Activated CD4-positive, alpha-beta T cell treated with anti-CD3 and anti-CD28 coated beads, Interleukin-2, amount 10 ng/mL, durations not matched to agents 7 days and 5 days (primary cell): ENCODE measurements at regions of chr10 and their contacts with region 1.

Region 1: GRCh38 chr10:17228091-17228940 is at the start of gene VIM:
- DNase-seq: peak; percentile 88
- H3K4me3 Mint-ChIP-seq: peak within 1 kb of the TSS; percentile 99
- H3K27ac Mint-ChIP-seq: peak within 1 kb of the TSS; percentile 100
- H3K4me1 Mint-ChIP-seq: peaks cover 50% of the 10 kb centered on the region
- H3K27me3 Mint-ChIP-seq: peaks cover 2% of the 10 kb centered on the region
- total RNA-seq, gene VIM: 2,713 to 2,904 TPM

Region 2: GRCh38 chr10:17151716-17152115 is 76.6 kb before region 1 on chr10:
- CTCF ChIA-PET with region 1: no interaction called
- POLR2A ChIA-PET with region 1: no interaction called
- DNase-seq: no peak
- H3K4me3 Mint-ChIP-seq: no peak overlapping the region
- H3K27ac Mint-ChIP-seq: no peak overlapping the region
- H3K4me1 Mint-ChIP-seq: no peaks in the 10 kb centered on the region
- H3K27me3 Mint-ChIP-seq: no peaks in the 10 kb centered on the region

Region 3: DNA sequence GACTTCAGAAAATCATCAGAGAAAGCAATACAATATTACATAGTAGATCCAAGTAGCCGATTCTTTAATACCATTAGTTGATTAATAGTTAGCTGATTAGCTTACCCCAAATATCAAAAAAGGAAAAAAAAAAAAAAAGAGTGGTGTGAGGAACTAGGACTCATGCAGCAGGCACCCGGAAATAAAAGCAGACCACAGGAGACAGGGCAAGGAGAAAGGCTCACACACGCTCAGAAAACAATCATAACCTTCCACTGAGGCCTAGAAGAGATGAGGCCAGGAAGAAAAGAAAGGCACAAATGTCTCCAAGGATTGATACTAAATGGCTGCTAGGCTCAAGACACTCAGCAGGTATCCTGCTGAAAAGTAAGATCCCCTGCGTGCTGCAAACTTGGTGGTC is 52.8 kb before region 1 on chr10:
- CTCF ChIA-PET with region 1: no interaction called
- POLR2A ChIA-PET with region 1: interaction called, 11 read pairs
- DNase-seq: no peak
- H3K4me3 Mint-ChIP-seq: peak overlapping the region; percentile 57
- H3K27ac Mint-ChIP-seq: peak overlapping the region; percentile 83
- H3K4me1 Mint-ChIP-seq: peaks cover 21% of the 10 kb centered on the region
- H3K27me3 Mint-ChIP-seq: no peaks in the 10 kb centered on the region

Region 4: DNA sequence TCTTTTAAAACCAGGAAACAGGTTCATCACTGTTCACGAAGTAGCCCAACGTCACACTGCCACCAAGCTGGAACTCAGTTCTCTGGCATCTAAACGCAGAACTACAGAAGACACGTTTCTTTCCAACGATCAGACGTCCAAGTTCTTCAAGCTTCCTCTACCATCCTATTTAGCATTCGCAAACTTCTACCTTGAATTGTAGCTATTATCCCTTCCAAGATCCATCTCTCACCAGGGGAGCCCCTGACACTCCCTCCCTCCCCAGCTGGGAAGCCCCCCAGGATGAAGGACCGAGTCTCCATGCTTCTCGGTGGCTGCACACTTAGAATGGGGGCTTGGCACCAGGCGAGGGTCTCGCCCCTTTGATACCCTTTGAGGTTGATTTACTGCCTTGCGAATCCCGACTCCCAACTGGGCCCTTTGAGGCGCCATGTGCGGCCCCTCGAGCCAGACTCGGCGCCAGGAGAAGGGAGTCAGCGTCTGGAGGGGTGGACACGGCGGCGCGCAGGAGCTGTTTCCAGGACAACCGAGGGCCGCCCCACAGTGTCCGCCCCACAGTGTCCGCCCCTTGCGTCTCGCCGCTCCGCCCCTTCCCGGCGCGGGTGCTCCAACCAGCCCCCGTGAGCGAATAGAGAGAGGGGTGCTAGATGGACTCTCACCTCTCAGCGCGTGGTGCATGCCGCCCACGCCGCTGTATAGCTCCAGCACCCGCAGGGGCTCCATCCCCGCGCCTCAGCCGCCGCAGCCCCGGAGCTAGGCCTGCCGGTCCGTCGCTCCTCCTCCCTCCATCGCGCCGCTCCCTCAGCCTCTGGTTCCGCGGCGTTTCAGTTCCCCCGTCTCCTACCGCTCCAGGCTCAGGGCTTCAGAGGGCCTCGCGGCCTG is 27.2 kb before region 1 on chr10 and contains the start of gene TRDMT1:
- CTCF ChIA-PET with region 1: interaction called, 13 read pairs
- POLR2A ChIA-PET with region 1: interaction called, 20 read pairs
- DNase-seq: peak; percentile 77
- H3K4me3 Mint-ChIP-seq: peak within 1 kb of the TSS; percentile 79
- H3K27ac Mint-ChIP-seq: peak within 1 kb of the TSS; percentile 91
- H3K4me1 Mint-ChIP-seq: peaks cover 60% of the 10 kb centered on the region
- H3K27me3 Mint-ChIP-seq: no peaks in the 10 kb centered on the region
- total RNA-seq, gene TRDMT1: 14.1 to 17.2 TPM

Region 5: DNA sequence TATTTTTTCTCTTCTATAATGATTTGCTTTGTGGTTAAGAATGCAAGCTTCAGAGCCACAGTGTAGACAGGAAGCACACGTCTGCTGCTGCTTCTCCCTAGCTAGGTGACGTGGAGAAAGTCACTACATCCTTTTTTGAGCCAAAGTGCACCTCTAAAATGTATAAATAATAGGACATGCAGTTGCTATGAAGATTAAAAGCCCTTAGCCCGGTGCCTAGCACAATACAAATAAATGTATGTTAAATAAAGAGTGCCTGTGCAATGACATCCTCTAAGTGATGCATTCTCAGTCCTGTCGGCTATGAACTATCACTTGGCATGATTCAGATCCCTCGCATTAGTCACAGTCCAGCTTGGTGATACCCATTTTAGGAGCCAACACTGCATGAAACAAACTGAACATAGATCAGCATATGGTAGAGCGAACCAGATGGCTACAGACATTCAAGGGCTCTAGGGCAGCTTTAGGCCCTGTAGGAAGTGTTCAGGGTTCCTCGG is 22.1 kb before region 1 on chr10:
- CTCF ChIA-PET with region 1: interaction called, 13 read pairs
- POLR2A ChIA-PET with region 1: interaction called, 20 read pairs
- DNase-seq: peak; percentile 59
- H3K4me3 Mint-ChIP-seq: peak overlapping the region; percentile 32
- H3K27ac Mint-ChIP-seq: peak overlapping the region; percentile 88
- H3K4me1 Mint-ChIP-seq: peaks cover 59% of the 10 kb centered on the region
- H3K27me3 Mint-ChIP-seq: no peaks in the 10 kb centered on the region

Region 6: GRCh38 chr10:17272648-17273047 is 44.3 kb after region 1 on chr10:
- CTCF ChIA-PET with region 1: no interaction called
- POLR2A ChIA-PET with region 1: no interaction called
- DNase-seq: no peak
- H3K4me3 Mint-ChIP-seq: no peak overlapping the region
- H3K27ac Mint-ChIP-seq: no peak overlapping the region
- H3K4me1 Mint-ChIP-seq: peaks cover 1% of the 10 kb centered on the region
- H3K27me3 Mint-ChIP-seq: peaks cover 7% of the 10 kb centered on the region

Region 7: GRCh38 chr10:17430647-17431355 is 202.5 kb after region 1 on chr10:
- CTCF ChIA-PET with region 1: no interaction called
- POLR2A ChIA-PET with region 1: no interaction called
- DNase-seq: peak; percentile 69
- H3K4me3 Mint-ChIP-seq: no peak overlapping the region
- H3K27ac Mint-ChIP-seq: peak overlapping the region; percentile 3
- H3K4me1 Mint-ChIP-seq: peaks cover 56% of the 10 kb centered on the region
- H3K27me3 Mint-ChIP-seq: peaks cover 16% of the 10 kb centered on the region